ENCODE measurements at regions of chr2 and their contacts with region 1.

Region 1: GRCh38 chr2:157789933-157790511 is 86.1 kb downstream of the ACVR1 start:
- DNase-seq: no peak
- H3K4me3 ChIP-seq: no peak overlapping the region
- CTCF ChIP-seq: no peak
- POLR2A ChIP-seq: no peak

Region 2: DNA sequence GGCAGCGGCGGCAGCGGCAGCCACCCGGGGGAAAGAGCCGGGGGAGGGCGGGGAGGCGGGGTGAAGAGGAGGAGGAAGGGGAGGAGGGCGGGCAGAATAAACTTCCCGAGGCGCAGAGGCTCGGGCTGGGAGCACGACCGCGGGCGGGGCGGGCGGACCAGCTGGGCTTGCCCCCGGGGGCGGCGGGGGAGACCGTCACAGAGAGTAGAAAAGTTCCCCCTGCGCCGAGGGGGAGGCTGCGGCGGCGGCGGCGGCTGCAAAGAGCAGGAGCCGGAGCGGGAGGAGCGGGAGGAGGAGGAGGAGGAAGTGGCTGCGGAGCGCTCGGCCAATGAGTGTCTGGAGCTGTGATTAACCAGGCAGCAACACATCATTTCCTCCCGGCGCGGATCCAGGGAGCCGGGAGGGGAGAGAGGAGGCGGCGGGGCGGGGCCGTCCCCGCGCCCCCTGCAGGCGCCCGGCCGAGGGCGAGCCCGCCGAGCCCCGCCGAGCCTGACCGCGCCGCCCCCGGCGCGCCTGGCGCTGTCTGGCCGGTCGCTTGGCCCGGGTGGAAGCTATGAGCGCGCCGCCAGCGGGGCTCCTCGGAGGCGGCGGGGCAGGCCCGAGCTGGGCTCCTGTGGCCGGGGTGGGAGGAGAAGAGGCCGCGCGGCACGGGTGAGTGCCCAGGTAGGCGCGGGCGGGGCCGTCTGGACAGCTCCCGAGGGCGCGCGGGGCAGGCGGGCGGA is 86.2 kb after region 1 on chr2 and contains the start of gene ACVR1:
- intact Hi-C with region 1: loop called (anchors 5 kb)
- DNase-seq: peak; percentile 92 to 99
- H3K4me3 ChIP-seq: peak within 1 kb of the TSS; percentile 76
- CTCF ChIP-seq: no peak
- POLR2A ChIP-seq: peak in 1 of 2 donors; percentile 36
- total RNA-seq, gene ACVR1: 14.3 to 22.7 (median 15.2) TPM

Region 3: DNA sequence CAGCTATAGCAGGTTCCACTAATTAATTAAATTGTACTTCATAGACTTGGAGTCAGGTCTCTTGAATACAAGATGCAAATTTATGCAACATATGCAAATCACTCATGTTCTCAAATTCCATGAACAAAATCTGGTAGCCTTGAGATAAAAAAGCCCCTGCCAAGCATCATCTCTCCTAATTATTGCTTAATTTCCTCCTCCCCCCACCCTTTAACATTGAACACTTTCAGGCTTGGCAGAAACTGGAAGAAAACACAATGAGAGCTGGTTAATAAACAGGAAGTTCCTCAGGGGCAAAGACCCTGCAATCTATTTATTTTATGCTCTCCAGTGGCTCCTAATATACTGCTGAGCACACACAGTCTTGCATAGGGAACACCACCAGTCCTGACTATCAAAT is 121.7 kb after region 1 on chr2:
- intact Hi-C with region 1: no loop called
- DNase-seq: no peak
- H3K4me3 ChIP-seq: no peak overlapping the region
- CTCF ChIP-seq: no peak
- POLR2A ChIP-seq: no peak

Region 4: DNA sequence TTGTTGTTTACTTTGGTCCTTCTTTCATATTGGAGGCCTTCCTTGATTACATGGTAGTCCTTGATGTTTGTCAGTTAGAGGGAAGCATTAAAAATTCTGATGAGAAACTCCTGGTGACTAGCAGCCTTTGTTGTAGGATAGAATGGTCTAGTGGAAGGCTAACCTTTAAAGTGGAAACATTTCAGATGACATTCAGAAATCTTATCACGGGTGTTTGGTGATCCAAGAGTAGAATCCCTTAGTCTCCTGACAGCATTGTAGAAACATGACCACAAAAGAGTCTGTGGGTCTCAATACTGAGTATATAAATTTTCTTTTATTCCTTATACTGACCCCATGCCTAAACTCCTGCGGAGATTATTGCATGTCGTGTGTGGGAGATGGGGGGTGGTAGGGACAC is 1935.7 kb after region 1 on chr2:
- intact Hi-C with region 1: no loop called
- DNase-seq: no peak
- H3K4me3 ChIP-seq: no peak overlapping the region
- CTCF ChIP-seq: no peak
- POLR2A ChIP-seq: no peak

Measured in lower leg skin (tissue), 4 donors.